Posterior cingulate gyrus (tissue), 11 donors: ENCODE measurements at regions of chrX and their contacts with region 1.

Region 1: DNA sequence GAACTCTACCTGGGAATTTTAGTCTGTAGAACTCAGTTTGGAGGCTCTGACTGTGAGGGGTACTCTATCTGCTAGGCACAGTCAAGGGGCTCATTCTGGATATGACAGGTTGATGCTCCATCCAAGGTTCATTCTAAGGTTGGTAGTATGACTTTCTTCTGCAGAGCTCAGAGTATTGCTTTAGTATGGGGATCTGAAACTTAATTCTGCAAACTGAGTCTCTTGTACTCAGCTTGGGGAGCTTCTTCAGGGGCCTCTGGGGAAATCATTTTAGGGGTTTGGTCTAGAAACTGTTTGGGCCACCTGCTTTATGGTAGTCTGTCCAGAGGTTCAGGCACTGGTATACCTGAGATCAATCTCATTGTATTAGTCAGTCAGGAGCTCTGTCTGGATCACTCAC is 9.7 kb upstream of the TSR2 start:
- DNase-seq: no peak

Region 2: GRCh38 chrX:54442790-54443189 is 12.3 kb after region 1 on chrX:
- intact Hi-C with region 1: loop called (anchors 1 kb)
- DNase-seq: no peak